Posterior vena cava (tissue), 2 donors: ENCODE measurements at regions of chr12 and their contacts with region 1.

Region 1: DNA sequence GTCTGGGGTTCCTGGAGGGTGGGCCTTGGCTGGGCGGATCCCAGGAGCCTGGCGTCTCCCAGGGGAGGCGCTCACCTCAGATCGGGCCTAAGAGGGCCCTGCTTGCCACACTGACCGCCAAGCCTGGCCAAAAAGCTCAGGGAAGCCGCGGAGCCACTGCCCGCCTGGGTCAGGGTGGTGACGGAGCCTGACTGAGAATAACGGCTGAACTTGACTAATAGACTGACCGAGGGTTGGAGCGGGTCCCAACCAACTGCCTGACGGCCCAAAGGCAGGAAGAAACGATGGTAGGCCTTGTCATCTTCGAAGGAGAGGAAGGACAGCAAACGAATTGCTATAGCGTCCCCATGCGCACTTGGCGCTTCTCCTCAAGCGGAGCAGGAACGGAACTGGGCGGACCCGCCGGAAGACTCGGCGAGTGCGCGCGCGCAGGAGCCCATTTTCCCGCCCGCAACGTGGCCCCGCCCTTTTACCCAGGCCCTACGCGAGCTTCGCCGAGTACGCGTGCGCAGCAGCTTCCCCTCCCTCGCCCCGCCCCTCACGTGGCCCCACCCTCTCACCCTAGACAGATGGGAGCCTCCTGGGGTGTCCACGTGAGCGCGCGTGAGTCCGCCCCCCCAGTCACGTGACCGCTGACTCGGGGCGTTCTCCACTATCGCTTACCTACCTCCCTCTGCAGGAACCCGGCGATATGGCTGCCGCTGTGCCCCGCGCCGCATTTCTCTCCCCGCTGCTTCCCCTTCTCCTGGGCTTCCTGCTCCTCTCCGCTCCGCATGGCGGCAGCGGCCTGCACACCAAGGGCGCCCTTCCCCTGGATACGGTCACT is at the starts of genes ERP29 and TMEM116:
- DNase-seq: peak; percentile 100
- total RNA-seq, gene ERP29: 30.4 to 52.2 TPM
- total RNA-seq, gene TMEM116: 6.1 to 7.0 TPM

Region 2: GRCh38 chr12:110149086-110149660 is 1863.8 kb before region 1 on chr12:
- intact Hi-C with region 1: no loop called
- DNase-seq: no peak

Region 3: DNA sequence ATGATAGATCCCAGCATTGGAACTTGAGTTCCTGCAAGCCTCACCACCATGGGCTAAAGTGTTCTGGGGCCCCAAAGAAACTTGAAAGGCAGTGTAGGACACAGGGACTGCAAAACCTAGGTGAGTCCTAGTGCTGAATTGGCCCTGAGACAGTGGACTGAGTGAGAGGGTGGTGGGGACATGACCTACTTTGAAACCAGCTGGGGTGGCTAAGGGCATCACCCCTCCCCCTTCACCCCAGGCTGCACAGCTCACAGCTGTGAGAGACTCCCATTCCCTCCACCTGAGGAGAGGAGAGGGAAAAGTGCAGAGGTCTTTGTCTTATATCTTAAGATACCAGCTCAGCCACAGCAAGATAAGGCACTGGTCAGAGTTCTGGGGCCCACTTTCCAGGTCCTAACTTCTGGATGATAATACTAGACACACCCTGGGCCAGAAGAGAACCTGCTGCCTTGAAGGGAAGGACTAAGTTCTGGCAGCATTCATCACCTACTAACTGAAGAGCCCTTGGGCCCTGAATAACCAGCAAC is 108.5 kb before region 1 on chr12:
- intact Hi-C with region 1: no loop called
- DNase-seq: no peak

Region 4: DNA sequence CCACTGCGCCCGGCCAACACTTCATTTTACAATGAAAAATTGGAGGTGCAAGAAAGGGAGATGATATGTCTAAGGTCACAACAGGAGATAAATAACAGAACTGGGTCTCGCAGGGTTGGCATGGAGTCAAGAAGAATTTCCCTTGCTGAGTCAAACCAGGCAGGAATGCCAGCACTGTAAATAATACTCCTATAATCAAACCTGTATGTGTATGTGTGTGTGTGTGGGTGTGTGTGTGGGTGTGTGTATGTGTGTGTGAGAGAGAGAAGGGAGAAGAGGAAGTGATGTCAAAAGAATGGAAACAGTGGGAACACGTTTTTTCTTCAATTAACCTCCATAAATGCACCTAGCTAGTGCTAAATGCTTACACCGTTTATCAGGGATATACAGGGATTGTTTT is 70.4 kb before region 1 on chr12:
- intact Hi-C with region 1: loop called in 1 of 2 experiments (anchors 10 kb)
- DNase-seq: no peak

Region 5: DNA sequence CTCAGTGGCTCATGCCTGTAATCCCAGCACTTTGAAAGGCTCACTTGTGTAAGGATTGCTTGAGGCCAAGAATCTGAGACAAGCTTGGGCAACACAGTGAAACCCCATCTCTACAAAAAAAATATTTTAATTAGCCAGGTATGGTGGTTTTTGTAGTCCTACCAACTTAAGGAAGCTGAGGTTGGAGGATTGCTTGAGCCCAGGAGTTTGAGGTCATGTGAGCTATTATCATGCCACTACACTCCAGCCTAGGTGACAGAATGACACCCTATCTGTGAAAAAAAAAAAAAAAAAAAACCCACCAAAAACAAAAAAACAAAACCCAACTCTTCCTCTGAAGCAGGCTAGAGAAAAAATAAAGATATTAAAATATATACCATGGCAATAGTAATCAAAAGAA is 41.2 kb before region 1 on chr12:
- intact Hi-C with region 1: loop called in 1 of 2 experiments (anchors 2 kb)
- DNase-seq: no peak

Region 6: DNA sequence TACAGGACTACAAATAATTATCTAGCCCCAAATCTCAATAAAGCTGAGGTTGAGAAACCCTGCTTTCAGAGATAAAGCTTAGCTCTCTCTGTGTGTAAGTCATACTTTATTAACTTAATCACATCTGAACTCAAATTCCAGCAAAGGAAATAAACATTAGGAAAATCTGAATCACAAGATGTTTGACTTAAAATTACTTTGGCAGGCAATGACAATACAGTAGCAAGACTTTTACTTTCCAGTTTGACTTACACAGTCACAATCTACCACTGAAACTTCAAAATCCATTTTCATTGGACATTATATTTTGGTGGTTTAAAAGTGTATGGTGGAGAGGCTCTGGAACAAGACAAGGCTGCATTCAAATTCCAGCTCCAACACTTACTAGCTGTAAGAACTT is 11.4 kb before region 1 on chr12:
- intact Hi-C with region 1: no loop called
- DNase-seq: no peak